Activated T-helper 1 cell treated with anti-CD3 and anti-CD28 coated beads, Interleukin-12 subunit alpha, Interleukin-12 subunit beta, Interleukin-2, Interleukin-4 antibody, amounts not matched to agents 30 ng/mL and 10 ng/mL and 1 ng/mL, durations not matched to agents 14 hours and 24 hours and 36 hours (primary cell): ENCODE measurements at regions of chr12 and their contacts with region 1.

Region 1: GRCh38 chr12:56636675-56637540 is 6.8 kb upstream of the BAZ2A start:
- DNase-seq: peak; percentile 79
- H3K4me3 Mint-ChIP-seq: peak overlapping the region; percentile 98
- H3K27ac Mint-ChIP-seq: peak overlapping the region; percentile 92
- H3K4me1 Mint-ChIP-seq: peaks cover 62% of the 10 kb centered on the region
- H3K27me3 Mint-ChIP-seq: no peaks in the 10 kb centered on the region

Region 2: GRCh38 chr12:56677680-56678079 is 40.8 kb after region 1 on chr12:
- intact Hi-C with region 1: loop called (anchors 1 kb)
- DNase-seq: no peak
- H3K4me3 Mint-ChIP-seq: no peak overlapping the region
- H3K27ac Mint-ChIP-seq: peak overlapping the region; percentile 55
- H3K4me1 Mint-ChIP-seq: peaks cover 40% of the 10 kb centered on the region
- H3K27me3 Mint-ChIP-seq: no peaks in the 10 kb centered on the region

Region 3: GRCh38 chr12:56724972-56725722 is 88.2 kb after region 1 on chr12 and contains the start of gene NACA:
- intact Hi-C with region 1: loop called (anchors 2 kb)
- DNase-seq: peak; percentile 98
- H3K4me3 Mint-ChIP-seq: peak within 1 kb of the TSS; percentile 91
- H3K27ac Mint-ChIP-seq: peak within 1 kb of the TSS; percentile 91
- H3K4me1 Mint-ChIP-seq: peaks cover 48% of the 10 kb centered on the region
- H3K27me3 Mint-ChIP-seq: peaks cover 1% of the 10 kb centered on the region
- total RNA-seq, gene NACA: 942 and 963 TPM in 2 replicates